Activated B cell treated with CpG ODN at 0.5 μM for 24 hours (primary cell): ENCODE measurements at regions of chr5 and their contacts with region 1.

Region 1: GRCh38 chr5:66757188-66757833 is 161.1 kb downstream of the MAST4 start:
- DNase-seq: no peak
- ATAC-seq: no peak
- H3K4me3 Mint-ChIP-seq: no peak overlapping the region
- H3K27ac Mint-ChIP-seq: no peak overlapping the region
- H3K4me1 Mint-ChIP-seq: peaks cover 9% of the 10 kb centered on the region
- H3K27me3 Mint-ChIP-seq: peaks cover 11% of the 10 kb centered on the region
- CTCF ChIP-seq: no peak

Region 2: GRCh38 chr5:65742565-65743231 is 1014.6 kb before region 1 on chr5:
- CTCF ChIA-PET with region 1: no interaction called
- POLR2A ChIA-PET with region 1: no interaction called
- intact Hi-C with region 1: loop called (anchors 10 kb)
- DNase-seq: no peak
- ATAC-seq: peak; percentile 54
- H3K4me3 Mint-ChIP-seq: no peak overlapping the region
- H3K27ac Mint-ChIP-seq: no peak overlapping the region
- H3K4me1 Mint-ChIP-seq: peaks cover 5% of the 10 kb centered on the region
- H3K27me3 Mint-ChIP-seq: no peaks in the 10 kb centered on the region
- CTCF ChIP-seq: no peak

Region 3: DNA sequence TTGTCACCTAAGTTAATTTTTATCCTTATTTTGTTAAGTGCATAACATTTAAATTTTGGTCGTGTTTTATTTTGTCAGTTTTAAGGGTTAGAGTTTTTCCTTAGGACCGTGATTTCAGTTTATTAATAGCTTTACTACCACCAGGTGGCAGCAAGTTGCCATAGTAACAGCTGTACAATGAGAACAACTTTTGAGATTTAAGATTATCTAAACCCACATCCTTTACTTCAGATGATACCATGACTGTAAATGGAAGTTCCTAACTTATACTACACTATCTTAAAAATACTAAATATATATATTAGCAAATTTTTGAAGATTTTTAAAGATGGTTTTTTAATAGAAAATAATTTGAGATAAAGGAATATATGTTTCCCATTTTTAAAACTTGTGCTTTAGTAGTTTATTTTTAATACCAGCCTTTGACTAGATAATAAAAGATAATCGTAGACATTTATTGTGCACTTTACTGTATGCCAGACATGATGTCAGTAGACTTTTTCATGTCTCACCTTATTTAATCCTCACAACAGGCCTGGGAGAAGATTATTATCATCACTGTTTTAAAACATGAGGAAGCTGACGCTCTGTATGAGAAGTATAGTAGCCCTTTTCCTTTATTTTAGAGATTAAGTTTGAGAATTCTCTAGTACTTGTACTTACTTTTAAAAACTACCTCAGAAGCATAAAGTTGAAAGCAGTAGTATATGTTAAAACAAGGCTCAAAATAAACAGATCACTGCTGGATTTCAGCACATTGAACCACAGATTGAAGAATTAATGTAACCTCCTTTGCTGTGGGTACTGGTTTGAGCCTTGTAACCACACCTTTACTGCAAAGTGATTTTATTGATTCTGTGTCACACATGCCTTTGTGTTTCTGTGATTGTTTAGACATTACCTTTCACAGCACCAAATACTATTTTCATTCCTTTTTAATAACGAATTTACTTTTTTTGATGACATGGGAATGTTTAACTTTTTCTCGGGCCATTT is 585.7 kb before region 1 on chr5:
- CTCF ChIA-PET with region 1: interaction called, 8 read pairs
- POLR2A ChIA-PET with region 1: no interaction called
- intact Hi-C with region 1: loop called (anchors 1 kb)
- DNase-seq: no peak
- ATAC-seq: peak; percentile 65
- H3K4me3 Mint-ChIP-seq: no peak overlapping the region
- H3K27ac Mint-ChIP-seq: no peak overlapping the region
- H3K4me1 Mint-ChIP-seq: peaks cover 14% of the 10 kb centered on the region
- H3K27me3 Mint-ChIP-seq: no peaks in the 10 kb centered on the region
- CTCF ChIP-seq: no peak

Region 4: GRCh38 chr5:66469684-66470083 is 287.6 kb before region 1 on chr5:
- CTCF ChIA-PET with region 1: interaction called, 8 read pairs
- POLR2A ChIA-PET with region 1: no interaction called
- intact Hi-C with region 1: loop called (anchors 1 kb)
- DNase-seq: no peak
- ATAC-seq: no peak
- H3K4me3 Mint-ChIP-seq: no peak overlapping the region
- H3K27ac Mint-ChIP-seq: no peak overlapping the region
- H3K4me1 Mint-ChIP-seq: peaks cover 15% of the 10 kb centered on the region
- H3K27me3 Mint-ChIP-seq: no peaks in the 10 kb centered on the region
- CTCF ChIP-seq: no peak

Region 5: GRCh38 chr5:66633795-66634194 is 123.5 kb before region 1 on chr5:
- CTCF ChIA-PET with region 1: no interaction called
- POLR2A ChIA-PET with region 1: no interaction called
- intact Hi-C with region 1: no loop called
- DNase-seq: no peak
- ATAC-seq: no peak
- H3K4me3 Mint-ChIP-seq: no peak overlapping the region
- H3K27ac Mint-ChIP-seq: no peak overlapping the region
- H3K4me1 Mint-ChIP-seq: peaks cover under 1% of the 10 kb centered on the region
- H3K27me3 Mint-ChIP-seq: no peaks in the 10 kb centered on the region
- CTCF ChIP-seq: no peak